A549 (cell line): ENCODE measurements at regions of chr10 and their contacts with region 1.

Region 1: DNA sequence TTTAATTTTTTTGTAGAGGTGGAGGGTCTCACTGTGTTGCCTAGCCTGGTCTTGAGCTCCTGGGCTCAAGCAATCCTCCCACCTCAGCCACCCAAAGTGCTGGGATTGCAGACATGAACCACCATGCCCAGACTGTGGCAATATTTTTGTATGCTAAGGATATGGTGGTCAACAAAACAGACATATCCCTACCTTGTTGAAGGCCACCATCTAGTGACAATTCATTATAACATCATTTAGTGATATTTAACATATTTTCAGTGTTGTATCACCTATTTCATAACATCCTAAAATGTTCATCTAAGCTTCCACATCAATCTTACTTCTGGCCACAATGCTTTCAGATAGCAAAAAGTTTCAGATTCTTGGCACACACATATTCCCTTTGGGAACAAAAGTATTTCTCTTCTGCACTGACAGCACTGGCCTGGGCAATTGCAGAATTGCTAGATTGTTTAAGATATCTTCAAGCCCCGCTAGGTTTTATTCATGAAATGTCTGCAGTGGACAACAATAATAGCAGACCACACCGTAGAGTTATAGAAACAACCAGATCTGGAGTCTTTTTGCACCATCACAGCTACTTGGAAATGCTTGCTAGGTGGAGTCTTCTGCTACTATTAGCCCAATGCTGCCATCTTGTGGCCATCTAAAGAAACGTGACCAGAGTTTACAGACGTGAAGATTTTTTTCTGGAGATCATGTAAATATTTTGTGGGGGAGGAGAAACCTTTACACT is 58.4 kb downstream of the DNAJC12 start:
- DNase-seq: peak; percentile 62 to 87
- ATAC-seq: peak; percentile 78 to 89
- H3K4me3 ChIP-seq: no peak overlapping the region
- H3K27ac ChIP-seq: no peak overlapping the region
- H3K4me1 ChIP-seq: 0 out of 3 replicates have a peak, but pooled peaks cover 4% of the 10 kb centered on the region
- CTCF ChIP-seq: peak; percentile 93
- EP300 ChIP-seq: no peak
- POLR2A ChIP-seq: no peak
- RAD21 ChIP-seq: peak; percentile 92 to 96

Region 2: GRCh38 chr10:67492317-67493019 is 287.2 kb before region 1 on chr10:
- CTCF ChIA-PET with region 1: no interaction called
- POLR2A ChIA-PET with region 1: no interaction called
- DNase-seq: peak; percentile 3 to 34
- ATAC-seq: peak; percentile 56 to 66; a peak in 5 of 6 replicates
- H3K4me3 ChIP-seq: no peak overlapping the region
- H3K27ac ChIP-seq: no peak overlapping the region
- H3K4me1 ChIP-seq: peaks cover 16% of the 10 kb centered on the region
- CTCF ChIP-seq: no peak
- EP300 ChIP-seq: no peak
- POLR2A ChIP-seq: no peak
- RAD21 ChIP-seq: no peak

Region 3: GRCh38 chr10:67676203-67676825 is 103.3 kb before region 1 on chr10:
- CTCF ChIA-PET with region 1: interaction called, 14 read pairs
- POLR2A ChIA-PET with region 1: no interaction called
- DNase-seq: no peak
- ATAC-seq: no peak
- H3K4me3 ChIP-seq: no peak overlapping the region
- H3K27ac ChIP-seq: no peak overlapping the region
- H3K4me1 ChIP-seq: no peaks in the 10 kb centered on the region
- CTCF ChIP-seq: no peak
- EP300 ChIP-seq: no peak
- POLR2A ChIP-seq: no peak
- RAD21 ChIP-seq: no peak

Region 4: GRCh38 chr10:67705921-67706320 is 73.7 kb before region 1 on chr10:
- CTCF ChIA-PET with region 1: interaction called, 12 read pairs
- POLR2A ChIA-PET with region 1: no interaction called
- DNase-seq: no peak
- ATAC-seq: no peak
- H3K4me3 ChIP-seq: no peak overlapping the region
- H3K27ac ChIP-seq: no peak overlapping the region
- H3K4me1 ChIP-seq: no peaks in the 10 kb centered on the region
- CTCF ChIP-seq: no peak
- EP300 ChIP-seq: no peak
- POLR2A ChIP-seq: no peak
- RAD21 ChIP-seq: no peak

Region 5: DNA sequence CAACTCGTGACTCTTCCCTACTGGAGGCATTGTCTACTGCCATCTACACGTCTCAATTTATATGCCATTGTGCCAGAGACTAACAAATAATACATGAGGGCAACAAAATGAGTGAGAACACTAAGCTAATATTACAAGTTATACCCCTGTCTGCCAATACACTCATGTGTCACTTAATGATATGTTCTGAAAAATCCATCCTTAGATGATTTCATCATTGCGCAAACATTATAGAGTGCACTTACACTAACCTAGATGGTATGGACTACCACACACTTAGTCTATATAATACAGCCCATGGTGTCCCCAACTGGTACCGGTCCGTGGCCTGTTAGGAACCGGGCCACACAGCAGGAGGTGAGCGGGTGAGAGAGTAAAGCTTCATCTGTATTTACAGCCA is 19.4 kb before region 1 on chr10:
- CTCF ChIA-PET with region 1: interaction called, 26 read pairs
- POLR2A ChIA-PET with region 1: interaction called, 4 read pairs
- DNase-seq: no peak
- ATAC-seq: no peak
- H3K4me3 ChIP-seq: no peak overlapping the region
- H3K27ac ChIP-seq: no peak overlapping the region
- H3K4me1 ChIP-seq: no peaks in the 10 kb centered on the region
- CTCF ChIP-seq: no peak
- EP300 ChIP-seq: no peak
- POLR2A ChIP-seq: no peak
- RAD21 ChIP-seq: no peak